ENCODE measurements at regions of chr3 and their contacts with region 1.

Region 1: GRCh38 chr3:113575206-113575605 is 42.9 kb downstream of the SIDT1 start:
- DNase-seq: no peak
- H3K4me3 Mint-ChIP-seq: no peak overlapping the region
- H3K27ac Mint-ChIP-seq: no peak overlapping the region
- H3K4me1 Mint-ChIP-seq: peaks cover 5% of the 10 kb centered on the region
- H3K27me3 Mint-ChIP-seq: no peaks in the 10 kb centered on the region

Region 2: DNA sequence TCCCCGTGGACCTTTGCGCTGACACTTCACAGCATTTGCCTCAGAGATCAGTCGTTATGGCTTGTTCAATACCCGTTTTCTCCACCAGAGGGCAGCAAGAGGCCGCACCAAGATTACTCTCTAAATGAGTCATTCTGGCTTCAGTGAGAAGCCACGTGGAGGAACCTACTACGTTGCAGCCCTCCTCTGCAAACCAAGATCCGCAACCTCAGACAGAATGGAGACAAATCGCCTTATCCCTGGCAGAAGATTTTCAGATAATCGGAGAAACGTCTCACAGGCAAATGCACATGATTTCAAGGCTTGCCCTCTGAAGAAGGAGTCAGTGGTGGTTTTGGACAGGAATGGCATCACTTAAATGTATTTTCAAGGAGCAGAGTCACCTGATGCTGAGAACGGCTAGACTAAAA is 523.9 kb before region 1 on chr3:
- intact Hi-C with region 1: loop called (anchors 1 kb)
- DNase-seq: peak; percentile 81
- H3K4me3 Mint-ChIP-seq: no peak overlapping the region
- H3K27ac Mint-ChIP-seq: no peak overlapping the region
- H3K4me1 Mint-ChIP-seq: no peaks in the 10 kb centered on the region
- H3K27me3 Mint-ChIP-seq: peaks cover 4% of the 10 kb centered on the region

Region 3: GRCh38 chr3:113166719-113167492 is 408.3 kb before region 1 on chr3:
- intact Hi-C with region 1: no loop called
- DNase-seq: no peak
- H3K4me3 Mint-ChIP-seq: no peak overlapping the region
- H3K27ac Mint-ChIP-seq: no peak overlapping the region
- H3K4me1 Mint-ChIP-seq: no peaks in the 10 kb centered on the region
- H3K27me3 Mint-ChIP-seq: peaks cover 3% of the 10 kb centered on the region

Region 4: DNA sequence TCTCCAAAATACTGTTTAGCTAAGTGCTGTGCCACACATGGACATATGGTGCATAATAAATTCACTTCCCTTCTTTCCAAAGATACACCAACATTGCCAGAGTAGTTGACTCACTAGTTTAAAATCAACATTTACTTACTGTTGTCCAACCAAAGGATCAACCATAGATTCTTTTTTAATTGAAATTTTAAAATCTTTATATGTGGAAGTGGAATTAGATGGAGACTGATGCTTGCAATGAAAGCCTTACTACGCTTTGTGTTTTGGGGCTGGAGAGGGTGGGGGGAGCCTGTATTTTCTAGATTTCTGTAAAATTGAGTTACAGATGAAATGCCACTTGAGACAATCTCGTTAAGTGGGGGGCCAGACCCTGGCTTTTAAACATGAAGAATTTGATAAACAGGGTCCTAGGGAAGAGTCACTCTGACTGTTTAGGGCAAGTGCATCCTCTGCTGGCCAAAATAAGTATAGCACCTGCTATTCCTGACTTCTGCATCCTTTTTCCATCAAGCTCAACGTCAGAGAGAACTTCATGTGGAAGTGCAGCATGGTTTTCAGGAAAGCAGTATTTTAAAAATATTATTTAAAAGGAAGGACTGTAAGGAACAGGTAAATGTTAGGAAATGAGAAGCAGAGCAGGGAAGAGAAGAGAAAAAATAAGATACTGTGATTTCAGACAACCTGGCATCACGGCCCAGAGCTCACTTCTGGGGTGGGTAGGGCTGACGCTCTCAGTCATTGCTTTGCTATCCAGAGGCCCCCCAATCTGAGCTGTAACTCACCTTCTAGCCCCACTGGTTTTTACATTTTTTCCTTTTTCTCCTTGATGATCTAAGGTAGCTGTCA is 287.2 kb before region 1 on chr3:
- intact Hi-C with region 1: loop called (anchors 1 kb)
- DNase-seq: peak; percentile 10
- H3K4me3 Mint-ChIP-seq: no peak overlapping the region
- H3K27ac Mint-ChIP-seq: no peak overlapping the region
- H3K4me1 Mint-ChIP-seq: peaks cover 6% of the 10 kb centered on the region
- H3K27me3 Mint-ChIP-seq: peaks cover 2% of the 10 kb centered on the region

Region 5: DNA sequence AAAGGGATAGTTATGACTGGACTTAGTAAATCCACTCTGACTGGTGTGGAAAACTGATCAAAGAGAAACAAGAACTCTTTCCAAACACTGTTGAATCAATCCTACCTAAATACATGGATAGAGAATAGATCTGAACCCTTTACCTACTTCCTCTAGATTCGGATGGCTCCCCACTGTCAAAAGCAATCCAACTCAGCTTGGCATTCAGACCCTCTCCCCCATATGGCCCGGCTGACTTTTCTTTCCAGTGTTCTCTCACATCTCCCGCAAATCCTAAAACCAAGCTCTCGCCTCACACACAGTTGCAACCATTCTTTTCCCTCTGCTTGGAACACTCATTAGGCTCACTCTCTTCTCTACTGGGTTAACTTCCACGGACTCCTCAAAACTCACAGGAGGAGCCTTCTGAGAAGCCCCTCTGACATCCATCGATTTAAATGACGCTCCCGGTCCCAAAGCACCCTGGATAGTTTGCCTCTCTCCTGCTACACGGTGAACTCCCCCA is 60.9 kb before region 1 on chr3:
- intact Hi-C with region 1: loop called (anchors 1 kb)
- DNase-seq: no peak
- H3K4me3 Mint-ChIP-seq: no peak overlapping the region
- H3K27ac Mint-ChIP-seq: no peak overlapping the region
- H3K4me1 Mint-ChIP-seq: peaks cover 7% of the 10 kb centered on the region
- H3K27me3 Mint-ChIP-seq: peaks cover 24% of the 10 kb centered on the region

Region 6: GRCh38 chr3:113606539-113607218 is 31.5 kb after region 1 on chr3:
- intact Hi-C with region 1: loop called (anchors 2 kb)
- DNase-seq: peak; percentile 47
- H3K4me3 Mint-ChIP-seq: no peak overlapping the region
- H3K27ac Mint-ChIP-seq: no peak overlapping the region
- H3K4me1 Mint-ChIP-seq: peaks cover 24% of the 10 kb centered on the region
- H3K27me3 Mint-ChIP-seq: no peaks in the 10 kb centered on the region

Region 7: GRCh38 chr3:113912552-113913236 is 337.5 kb after region 1 on chr3:
- intact Hi-C with region 1: loop called (anchors 2 kb)
- DNase-seq: peak; percentile 8
- H3K4me3 Mint-ChIP-seq: no peak overlapping the region
- H3K27ac Mint-ChIP-seq: no peak overlapping the region
- H3K4me1 Mint-ChIP-seq: peaks cover 7% of the 10 kb centered on the region
- H3K27me3 Mint-ChIP-seq: no peaks in the 10 kb centered on the region